ENCODE measurements at regions of chr6 and their contacts with region 1.

Region 1: GRCh38 chr6:24689964-24690363 is 23.1 kb downstream of the ACOT13 start:
- DNase-seq: no peak
- H3K4me3 Mint-ChIP-seq: no peak overlapping the region
- H3K27ac Mint-ChIP-seq: no peak overlapping the region
- H3K4me1 Mint-ChIP-seq: peaks cover 14% of the 10 kb centered on the region
- H3K27me3 Mint-ChIP-seq: no peaks in the 10 kb centered on the region

Region 2: DNA sequence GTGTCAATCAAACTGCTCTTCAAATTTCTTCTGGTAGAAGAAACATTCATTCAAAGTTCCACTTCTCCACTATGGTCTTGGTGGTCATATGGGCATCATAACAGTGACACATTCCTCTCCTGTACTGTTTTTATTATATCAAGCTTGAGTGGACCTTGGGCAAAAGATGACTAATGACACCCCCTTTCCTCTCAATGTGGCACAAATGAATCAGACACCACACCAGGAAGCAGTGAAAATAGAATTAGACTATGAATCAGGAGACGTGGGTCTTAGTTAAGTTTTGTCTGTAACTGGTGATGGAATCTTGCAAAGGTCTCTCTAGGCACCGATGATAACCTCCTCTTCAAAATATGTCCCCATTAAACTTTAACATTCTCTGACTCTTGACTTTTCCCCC is 572.9 kb before region 1 on chr6:
- intact Hi-C with region 1: no loop called
- DNase-seq: no peak
- H3K4me3 Mint-ChIP-seq: no peak overlapping the region
- H3K27ac Mint-ChIP-seq: no peak overlapping the region
- H3K4me1 Mint-ChIP-seq: no peaks in the 10 kb centered on the region
- H3K27me3 Mint-ChIP-seq: no peaks in the 10 kb centered on the region

Region 3: GRCh38 chr6:24283043-24283985 is 406.6 kb before region 1 on chr6:
- intact Hi-C with region 1: loop called (anchors 10 kb)
- DNase-seq: no peak
- H3K4me3 Mint-ChIP-seq: no peak overlapping the region
- H3K27ac Mint-ChIP-seq: no peak overlapping the region
- H3K4me1 Mint-ChIP-seq: peaks cover 6% of the 10 kb centered on the region
- H3K27me3 Mint-ChIP-seq: peaks cover 3% of the 10 kb centered on the region

Region 4: DNA sequence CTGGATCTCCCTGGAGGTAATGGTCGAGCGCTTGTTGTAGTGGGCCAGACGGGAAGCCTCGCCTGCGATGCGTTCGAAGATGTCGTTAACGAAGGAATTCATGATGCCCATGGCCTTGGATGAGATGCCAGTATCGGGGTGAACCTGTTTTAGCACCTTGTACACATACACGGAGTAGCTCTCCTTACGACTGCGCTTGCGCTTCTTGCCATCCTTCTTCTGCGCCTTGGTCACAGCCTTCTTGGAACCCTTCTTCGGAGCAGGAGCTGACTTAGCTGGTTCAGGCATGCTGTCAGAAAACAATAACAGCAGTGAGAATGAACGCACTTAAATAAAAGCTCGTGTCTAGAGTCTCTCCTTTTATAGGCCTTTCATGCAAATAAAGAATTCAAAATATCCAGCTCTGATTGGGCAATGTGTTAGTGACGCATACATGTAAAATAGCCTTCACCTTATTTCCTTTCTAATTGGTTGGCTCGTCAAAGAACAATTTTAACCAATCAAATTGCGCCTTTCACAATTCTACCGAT is 1526.5 kb after region 1 on chr6:
- intact Hi-C with region 1: no loop called
- DNase-seq: peak; percentile 87
- H3K4me3 Mint-ChIP-seq: no peak overlapping the region
- H3K27ac Mint-ChIP-seq: no peak overlapping the region
- H3K4me1 Mint-ChIP-seq: peaks cover 24% of the 10 kb centered on the region
- H3K27me3 Mint-ChIP-seq: no peaks in the 10 kb centered on the region